Left ventricle myocardium inferior (tissue), 1 donor: ENCODE measurements at regions of chr17 and their contacts with region 1.

Region 1: GRCh38 chr17:16521070-16521727 is 29.2 kb upstream of the LRRC75A start:
- DNase-seq: peak; percentile 50
- H3K4me3 ChIP-seq: no peak overlapping the region
- H3K27ac ChIP-seq: no peak overlapping the region
- H3K4me1 ChIP-seq: peaks cover 13% of the 10 kb centered on the region
- H3K27me3 ChIP-seq: peaks cover 21% of the 10 kb centered on the region
- CTCF ChIP-seq: peak; percentile 95

Region 2: DNA sequence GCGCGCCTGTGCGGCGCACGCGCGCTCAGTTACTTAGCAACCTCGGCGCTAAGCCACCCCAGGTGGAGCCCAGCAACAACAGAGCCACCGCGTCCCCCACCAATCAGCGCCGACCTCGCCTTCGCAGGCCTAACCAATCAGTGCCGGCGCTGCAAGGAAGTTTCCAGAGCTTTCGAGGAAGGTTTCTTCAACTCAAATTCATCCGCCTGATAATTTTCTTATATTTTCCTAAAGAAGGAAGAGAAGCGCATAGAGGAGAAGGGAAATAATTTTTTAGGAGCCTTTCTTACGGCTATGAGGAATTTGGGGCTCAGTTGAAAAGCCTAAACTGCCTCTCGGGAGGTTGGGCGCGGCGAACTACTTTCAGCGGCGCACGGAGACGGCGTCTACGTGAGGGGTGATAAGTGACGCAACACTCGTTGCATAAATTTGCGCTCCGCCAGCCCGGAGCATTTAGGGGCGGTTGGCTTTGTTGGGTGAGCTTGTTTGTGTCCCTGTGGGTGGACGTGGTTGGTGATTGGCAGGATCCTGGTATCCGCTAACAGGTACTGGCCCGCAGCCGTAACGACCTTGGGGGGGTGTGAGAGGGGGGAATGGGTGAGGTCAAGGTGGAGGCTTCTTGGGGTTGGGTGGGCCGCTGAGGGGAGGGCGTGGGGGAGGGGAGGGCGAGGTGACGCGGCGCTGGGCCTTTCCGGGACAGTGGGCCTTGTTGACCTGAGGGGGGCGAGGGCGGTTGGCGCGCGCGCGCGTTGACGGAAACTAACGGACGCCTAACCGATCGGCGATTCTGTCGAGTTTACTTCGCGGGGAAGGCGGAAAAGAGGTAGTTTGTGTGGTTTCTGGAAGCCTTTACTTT is 140.3 kb before region 1 on chr17 and contains the start of gene UBB:
- intact Hi-C with region 1: loop called (anchors 10 kb)
- DNase-seq: peak; percentile 97
- H3K4me3 ChIP-seq: peak within 1 kb of the TSS; percentile 74
- H3K27ac ChIP-seq: peak within 1 kb of the TSS; percentile 99
- H3K4me1 ChIP-seq: peaks cover 47% of the 10 kb centered on the region
- H3K27me3 ChIP-seq: no peaks in the 10 kb centered on the region
- CTCF ChIP-seq: no peak
- total RNA-seq, gene UBB: 1,605 TPM

Region 3: DNA sequence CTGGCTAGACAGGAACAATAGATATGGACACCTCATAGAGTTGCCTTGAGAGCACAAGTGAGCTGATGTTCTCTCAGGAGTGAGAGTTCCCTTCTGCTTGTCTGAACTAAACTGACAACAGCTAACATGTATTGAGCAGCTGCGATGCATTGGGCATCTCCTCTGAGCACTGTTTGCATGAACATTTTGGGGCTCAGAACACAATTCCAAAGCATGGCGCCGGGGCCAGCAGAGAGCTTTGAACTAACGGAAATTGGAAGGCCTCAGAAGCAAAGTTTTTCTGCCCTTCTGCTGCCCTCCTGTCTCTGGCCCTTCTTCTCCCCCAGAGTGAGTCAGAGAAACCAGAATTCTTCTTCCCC is 67.7 kb before region 1 on chr17:
- intact Hi-C with region 1: loop called (anchors 5 kb)
- DNase-seq: no peak
- H3K4me3 ChIP-seq: no peak overlapping the region
- H3K27ac ChIP-seq: no peak overlapping the region
- H3K4me1 ChIP-seq: no peaks in the 10 kb centered on the region
- H3K27me3 ChIP-seq: no peaks in the 10 kb centered on the region
- CTCF ChIP-seq: no peak

Region 4: DNA sequence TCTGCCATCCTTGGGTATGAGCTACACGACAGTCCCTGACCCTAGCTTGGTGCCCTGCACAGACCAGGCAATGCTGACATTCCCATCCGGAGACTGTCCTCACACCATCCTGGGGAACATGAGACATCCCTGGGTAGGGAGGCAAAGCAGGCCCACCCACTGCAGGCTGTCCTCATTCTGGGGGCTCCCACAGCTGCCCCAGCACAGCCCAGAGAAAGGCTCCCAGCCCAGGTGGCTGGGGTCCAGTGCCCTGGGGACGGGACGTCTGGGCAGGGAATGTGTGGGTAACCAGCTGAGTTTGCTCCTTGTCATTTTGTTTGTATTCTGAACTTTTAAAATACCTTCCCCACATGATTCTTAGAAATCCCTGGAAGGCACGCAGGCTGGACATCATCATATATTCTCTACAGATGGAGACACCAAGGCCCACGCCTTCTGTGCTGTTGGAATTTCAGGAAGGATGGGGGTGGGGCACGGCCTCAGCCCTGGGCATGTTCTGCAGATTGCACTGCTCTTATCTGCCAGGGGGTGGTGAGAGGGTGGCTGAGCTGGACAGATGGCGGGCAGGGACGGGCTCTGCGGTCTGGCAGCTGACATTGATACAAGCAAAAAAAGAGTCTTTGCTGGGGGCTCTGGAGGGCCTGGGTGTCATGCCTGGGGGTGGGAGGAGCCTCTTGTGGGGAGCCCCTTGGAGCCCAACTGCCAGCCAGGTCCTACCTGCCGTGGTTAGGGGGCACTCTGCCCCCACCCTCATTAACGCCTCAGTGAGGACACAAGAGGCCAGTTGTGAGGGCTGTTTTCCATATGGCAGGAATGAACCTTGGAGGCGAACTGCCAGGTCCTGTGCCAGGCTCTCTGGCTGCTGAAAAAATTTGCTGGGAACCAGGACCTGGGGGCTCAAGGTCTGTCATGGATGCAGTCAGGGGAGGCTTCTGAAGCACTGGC is 57.6 kb before region 1 on chr17:
- intact Hi-C with region 1: loop called (anchors 5 kb)
- DNase-seq: peak; percentile 63
- H3K4me3 ChIP-seq: peak overlapping the region; percentile 14
- H3K27ac ChIP-seq: peak overlapping the region; percentile 73
- H3K4me1 ChIP-seq: peaks cover 64% of the 10 kb centered on the region
- H3K27me3 ChIP-seq: no peaks in the 10 kb centered on the region
- CTCF ChIP-seq: peak; percentile 47